ENCODE measurements at regions of chr18 and their contacts with region 1.

Region 1: GRCh38 chr18:32930695-32931301 is 158.0 kb upstream of the KLHL14 start:
- DNase-seq: peak; percentile 27
- H3K4me3 ChIP-seq: no peak overlapping the region
- H3K27ac ChIP-seq: no peak overlapping the region
- H3K4me1 ChIP-seq: no peaks in the 10 kb centered on the region
- H3K27me3 ChIP-seq: no peaks in the 10 kb centered on the region
- CTCF ChIP-seq: peak; percentile 73 to 79

Region 2: GRCh38 chr18:32158108-32158624 is 772.6 kb before region 1 on chr18:
- CTCF ChIA-PET with region 1: no interaction called
- dilution Hi-C with region 1: no loop called
- in situ Hi-C with region 1: no loop called
- intact Hi-C with region 1: loop called (anchors 10 kb)
- DNase-seq: peak; percentile 71
- H3K4me3 ChIP-seq: peak overlapping the region in 1 of 3 experiments; percentile 31
- H3K27ac ChIP-seq: no peak overlapping the region
- H3K4me1 ChIP-seq: peaks cover 5% of the 10 kb centered on the region
- H3K27me3 ChIP-seq: no peaks in the 10 kb centered on the region
- CTCF ChIP-seq: peak; percentile 76 to 78

Region 3: GRCh38 chr18:32714571-32715148 is 216.1 kb before region 1 on chr18:
- CTCF ChIA-PET with region 1: no interaction called
- dilution Hi-C with region 1: no loop called
- in situ Hi-C with region 1: loop called in 1 of 2 experiments (anchors 10 kb)
- intact Hi-C with region 1: loop called (anchors 1 kb)
- DNase-seq: peak; percentile 64
- H3K4me3 ChIP-seq: no peak overlapping the region
- H3K27ac ChIP-seq: no peak overlapping the region
- H3K4me1 ChIP-seq: no peaks in the 10 kb centered on the region
- H3K27me3 ChIP-seq: no peaks in the 10 kb centered on the region
- CTCF ChIP-seq: peak; percentile 87 to 91

Region 4: GRCh38 chr18:32847691-32848090 is 83.1 kb before region 1 on chr18:
- CTCF ChIA-PET with region 1: no interaction called
- dilution Hi-C with region 1: no loop called
- in situ Hi-C with region 1: no loop called
- intact Hi-C with region 1: no loop called
- DNase-seq: no peak
- H3K4me3 ChIP-seq: no peak overlapping the region
- H3K27ac ChIP-seq: no peak overlapping the region
- H3K4me1 ChIP-seq: no peaks in the 10 kb centered on the region
- H3K27me3 ChIP-seq: no peaks in the 10 kb centered on the region
- CTCF ChIP-seq: no peak

Region 5: DNA sequence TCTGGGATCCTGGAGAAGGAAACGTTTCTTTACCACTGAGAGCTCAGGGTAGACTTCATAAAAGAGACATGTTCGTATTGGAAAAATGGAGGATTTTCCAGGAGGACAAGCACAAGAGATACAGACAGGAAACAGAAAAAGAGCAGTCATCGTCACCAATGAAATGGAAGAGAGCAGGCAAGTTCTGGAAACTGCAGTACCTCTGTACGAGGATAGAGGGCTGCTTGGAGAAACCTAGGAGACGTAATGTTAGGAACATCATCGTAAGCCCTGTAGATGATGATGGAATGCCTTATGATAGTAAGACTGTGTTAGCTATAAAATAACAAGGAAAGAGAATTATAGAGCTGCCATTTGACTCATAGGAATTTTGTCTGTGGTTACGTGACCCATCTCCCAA is 36.9 kb before region 1 on chr18:
- CTCF ChIA-PET with region 1: no interaction called
- dilution Hi-C with region 1: no loop called
- in situ Hi-C with region 1: no loop called
- intact Hi-C with region 1: loop called (anchors 2 kb)
- DNase-seq: no peak
- H3K4me3 ChIP-seq: no peak overlapping the region
- H3K27ac ChIP-seq: no peak overlapping the region
- H3K4me1 ChIP-seq: no peaks in the 10 kb centered on the region
- H3K27me3 ChIP-seq: peaks cover 5% of the 10 kb centered on the region
- CTCF ChIP-seq: peak; percentile 35 to 39

Region 6: GRCh38 chr18:32980896-32981295 is 50.1 kb after region 1 on chr18:
- CTCF ChIA-PET with region 1: no interaction called
- dilution Hi-C with region 1: no loop called
- in situ Hi-C with region 1: no loop called
- intact Hi-C with region 1: no loop called
- DNase-seq: no peak
- H3K4me3 ChIP-seq: no peak overlapping the region
- H3K27ac ChIP-seq: no peak overlapping the region
- H3K4me1 ChIP-seq: no peaks in the 10 kb centered on the region
- H3K27me3 ChIP-seq: no peaks in the 10 kb centered on the region
- CTCF ChIP-seq: no peak

Region 7: DNA sequence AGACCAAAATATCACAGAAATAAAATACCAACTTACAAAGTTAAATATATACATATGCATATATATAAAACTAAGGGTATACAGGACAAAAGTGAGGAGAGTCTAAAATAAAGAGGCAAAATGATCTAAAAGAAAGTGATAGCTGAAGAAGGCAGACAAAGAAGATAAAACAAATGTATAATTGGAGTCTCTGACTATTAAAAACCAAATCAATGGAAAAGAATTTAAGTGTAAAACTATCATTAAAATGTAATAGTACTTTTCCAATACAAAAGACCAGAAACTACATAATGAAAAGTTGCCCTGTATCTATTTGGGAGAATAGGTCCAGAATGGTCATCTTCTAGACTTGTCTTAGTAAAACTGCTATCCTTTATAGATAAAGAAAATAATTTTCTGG is 109.4 kb after region 1 on chr18:
- CTCF ChIA-PET with region 1: no interaction called
- dilution Hi-C with region 1: no loop called
- in situ Hi-C with region 1: no loop called
- intact Hi-C with region 1: no loop called
- DNase-seq: no peak
- H3K4me3 ChIP-seq: no peak overlapping the region
- H3K27ac ChIP-seq: no peak overlapping the region
- H3K4me1 ChIP-seq: no peaks in the 10 kb centered on the region
- H3K27me3 ChIP-seq: no peaks in the 10 kb centered on the region
- CTCF ChIP-seq: no peak

Measured in mammary epithelial cell (primary cell).